PC-3 (cell line): ENCODE measurements at regions of chr14 and their contacts with region 1.

Region 1: DNA sequence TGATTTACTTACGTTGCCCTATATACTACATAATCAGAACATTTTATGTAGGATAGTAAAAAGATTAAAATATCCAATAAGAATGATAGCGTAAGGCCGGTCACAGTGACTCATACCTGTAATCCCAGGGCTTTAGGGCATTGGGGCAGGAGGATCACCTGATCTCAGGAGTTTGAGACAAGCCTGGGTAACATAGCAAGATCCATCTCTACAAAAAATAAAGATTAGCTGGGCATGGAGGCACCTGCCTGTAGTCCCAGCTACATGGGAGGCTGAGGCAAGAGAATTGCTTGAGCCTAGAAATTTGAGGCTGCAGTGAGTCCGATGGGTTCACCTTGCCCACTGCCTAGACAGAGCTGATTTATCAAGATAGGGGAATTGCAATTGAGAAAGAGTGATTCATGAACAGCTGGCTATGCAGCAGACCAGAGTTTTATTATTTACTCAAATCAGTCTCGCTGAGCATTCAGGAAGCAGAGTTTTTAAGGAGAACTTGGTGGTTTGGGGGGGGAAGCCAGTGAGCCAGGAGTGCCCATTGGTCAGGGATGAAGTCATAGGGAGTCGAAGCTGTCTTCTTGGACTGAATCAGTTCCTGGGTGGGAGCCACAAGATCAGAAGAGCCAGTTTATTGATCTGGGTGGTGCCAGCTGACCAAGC is 24.8 kb upstream of the SGPP1 start:
- DNase-seq: peak; percentile 96
- ATAC-seq: peak; percentile 96
- H3K4me3 ChIP-seq: peak overlapping the region; percentile 53
- H3K27ac ChIP-seq: peak overlapping the region; percentile 93
- H3K4me1 ChIP-seq: peaks cover 10% of the 10 kb centered on the region
- H3K27me3 ChIP-seq: no peaks in the 10 kb centered on the region
- CTCF ChIP-seq: no peak

Region 2: GRCh38 chr14:63677821-63678380 is 74.7 kb before region 1 on chr14:
- CTCF ChIA-PET with region 1: no interaction called
- POLR2A ChIA-PET with region 1: no interaction called
- intact Hi-C with region 1: loop called (anchors 1 kb)
- DNase-seq: peak; percentile 96
- ATAC-seq: peak; percentile 92
- H3K4me3 ChIP-seq: peak overlapping the region; percentile 28
- H3K27ac ChIP-seq: peak overlapping the region; percentile 94
- H3K4me1 ChIP-seq: peaks cover 23% of the 10 kb centered on the region
- H3K27me3 ChIP-seq: no peaks in the 10 kb centered on the region
- CTCF ChIP-seq: no peak